Cardiac septum (tissue), 1 donor: ENCODE measurements at regions of chr6 and their contacts with region 1.

Region 1: DNA sequence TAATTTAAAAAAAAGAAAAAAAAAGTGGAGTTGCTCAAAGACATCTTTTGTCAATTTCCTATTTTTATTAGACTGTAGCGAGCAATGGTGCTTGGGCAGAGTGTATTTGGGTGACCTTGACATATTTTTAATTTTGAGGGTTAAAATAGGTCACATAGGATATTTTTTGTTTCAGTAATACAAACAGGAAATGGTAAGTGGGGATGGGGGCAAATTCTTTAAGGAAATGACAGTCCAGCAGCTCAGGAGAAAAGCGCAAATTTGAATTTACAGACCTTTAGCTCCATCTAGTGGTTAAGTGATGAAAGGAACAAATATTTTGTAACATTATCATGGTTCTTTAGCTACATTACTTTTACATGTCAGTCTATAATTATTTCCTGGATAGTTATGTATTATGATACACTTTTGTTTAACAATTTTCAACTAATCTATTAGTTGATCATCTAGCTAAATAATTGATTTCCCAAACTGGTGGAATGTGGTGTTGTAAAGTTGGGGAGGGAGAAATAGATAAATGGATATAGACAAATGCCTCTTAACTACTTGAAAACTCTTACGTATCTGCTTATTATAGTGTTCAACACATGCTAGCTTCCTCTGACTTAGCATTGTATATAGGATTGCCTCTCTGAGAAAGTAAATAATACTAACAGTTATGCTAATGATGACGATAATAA is 10.0 kb downstream of the CITED2 start:
- DNase-seq: no peak

Region 2: DNA sequence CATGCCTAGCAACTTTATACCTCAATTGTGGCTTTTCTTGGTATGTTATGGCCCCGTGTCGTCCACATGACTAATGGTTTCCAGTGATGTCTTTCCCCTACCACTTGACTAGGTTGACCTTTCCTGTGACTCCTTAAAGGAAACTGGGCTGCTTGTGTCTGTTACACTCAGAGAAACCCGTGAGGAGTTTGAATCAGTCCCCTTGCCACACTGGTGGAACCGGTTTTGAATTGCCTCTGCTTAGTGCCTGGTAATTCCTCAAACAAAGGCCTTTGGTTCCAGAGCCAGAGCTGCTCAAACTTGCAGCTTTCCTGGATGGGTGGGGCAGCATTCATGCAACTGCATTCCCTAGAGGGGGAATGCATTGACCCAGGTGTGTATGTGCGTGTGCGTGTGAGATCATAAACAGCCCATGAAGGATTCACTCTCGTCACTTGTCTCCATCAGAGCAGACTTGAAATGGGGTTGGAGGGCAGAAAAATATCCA is 546.6 kb before region 1 on chr6:
- intact Hi-C with region 1: loop called (anchors 5 kb)
- DNase-seq: no peak

Region 3: GRCh38 chr6:139124887-139125672 is 239.4 kb before region 1 on chr6:
- intact Hi-C with region 1: loop called (anchors 5 kb)
- DNase-seq: no peak

Region 4: DNA sequence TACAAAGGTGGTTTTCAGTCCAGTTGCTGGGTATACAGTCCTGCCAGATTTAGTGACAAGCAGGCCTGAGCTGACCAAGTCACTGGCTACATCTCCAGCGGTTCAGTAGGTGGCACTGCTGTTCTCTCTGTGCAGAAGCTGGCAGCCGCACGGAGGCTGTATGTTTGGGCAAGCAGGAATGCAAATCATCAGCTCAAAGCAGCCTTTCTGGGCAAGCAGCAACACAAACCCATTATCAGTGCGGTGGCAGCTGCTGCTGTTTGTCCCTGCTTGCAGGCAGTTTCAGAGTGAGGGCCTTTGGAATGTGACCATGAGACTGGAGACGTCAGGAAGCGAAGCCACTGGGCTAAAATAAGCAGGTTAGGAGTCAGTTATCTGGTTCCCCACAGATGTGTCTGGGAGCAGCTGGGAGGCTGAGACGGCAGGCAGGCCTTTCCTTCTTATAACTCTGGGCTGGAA is 145.1 kb before region 1 on chr6:
- intact Hi-C with region 1: loop called (anchors 1 kb)
- DNase-seq: peak; percentile 90

Region 5: DNA sequence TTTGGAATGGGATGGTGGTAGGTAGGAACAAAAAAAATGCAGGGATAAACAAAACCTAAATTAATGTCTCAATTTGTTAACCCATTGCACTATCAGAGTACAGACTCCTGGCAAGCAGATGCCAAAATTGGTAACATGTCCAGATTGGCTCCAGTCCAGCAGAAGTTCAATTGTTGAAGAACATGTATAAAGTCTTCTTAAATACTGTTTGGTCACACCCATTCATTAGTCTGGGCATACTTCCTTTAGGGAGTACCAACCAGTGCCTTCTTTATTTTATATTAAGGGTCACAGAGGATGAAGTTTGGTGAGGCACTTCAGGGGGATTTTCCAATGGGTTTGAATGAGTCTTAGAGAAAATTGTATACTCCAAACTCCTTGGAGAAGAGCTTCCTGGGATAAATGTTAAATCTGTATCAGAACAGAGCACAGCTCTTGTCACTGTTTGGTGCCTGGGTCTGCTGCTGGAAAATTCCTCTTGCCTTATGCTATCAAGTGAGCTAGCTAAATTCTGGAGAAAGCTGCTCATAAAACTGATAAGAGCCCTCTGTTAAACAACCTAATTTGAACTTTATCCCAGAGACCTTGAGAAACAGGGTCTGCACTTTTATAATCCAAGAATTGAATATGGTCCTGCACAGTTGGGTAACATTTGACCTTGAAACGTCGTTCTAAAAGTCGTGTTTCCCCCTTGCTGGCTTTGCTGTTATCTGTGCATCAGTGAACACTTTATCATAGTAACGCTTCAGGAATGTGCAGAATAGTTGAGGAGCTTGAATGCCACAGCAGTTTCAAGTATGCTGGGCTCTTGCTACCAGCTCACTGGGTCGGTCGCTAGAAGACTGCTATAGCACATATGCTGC is 344.1 kb after region 1 on chr6:
- intact Hi-C with region 1: no loop called
- DNase-seq: no peak